AG04449 (cell line): ENCODE measurements at regions of chr16 and their contacts with region 1.

Region 1: GRCh38 chr16:20849587-20850390 is 43.5 kb downstream of the REXO5 start:
- DNase-seq: no peak
- H3K4me3 ChIP-seq: no peak overlapping the region
- CTCF ChIP-seq: peak; percentile 93

Region 2: DNA sequence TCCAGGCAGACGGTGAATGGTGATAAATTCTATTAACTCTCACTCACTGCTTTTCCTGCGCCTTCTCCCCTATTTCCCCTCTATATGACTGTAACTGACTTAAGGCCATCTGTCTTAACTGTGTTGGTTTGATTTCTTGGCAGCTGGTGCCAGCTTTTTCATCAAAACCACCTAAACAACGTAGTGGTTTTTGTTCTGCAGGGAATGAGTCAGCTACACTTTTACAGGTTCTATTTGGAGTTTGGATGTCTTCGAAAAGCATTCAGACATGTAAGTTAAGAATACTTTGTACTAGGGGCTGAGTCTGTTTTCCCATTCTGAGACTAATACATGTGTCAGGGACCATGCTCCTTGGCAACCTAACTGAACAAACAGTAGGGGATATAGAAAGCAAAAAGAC is 35.0 kb before region 1 on chr16:
- CTCF ChIA-PET with region 1: interaction called, 11 read pairs
- POLR2A ChIA-PET with region 1: no interaction called
- DNase-seq: no peak
- H3K4me3 ChIP-seq: no peak overlapping the region
- CTCF ChIP-seq: no peak

Region 3: DNA sequence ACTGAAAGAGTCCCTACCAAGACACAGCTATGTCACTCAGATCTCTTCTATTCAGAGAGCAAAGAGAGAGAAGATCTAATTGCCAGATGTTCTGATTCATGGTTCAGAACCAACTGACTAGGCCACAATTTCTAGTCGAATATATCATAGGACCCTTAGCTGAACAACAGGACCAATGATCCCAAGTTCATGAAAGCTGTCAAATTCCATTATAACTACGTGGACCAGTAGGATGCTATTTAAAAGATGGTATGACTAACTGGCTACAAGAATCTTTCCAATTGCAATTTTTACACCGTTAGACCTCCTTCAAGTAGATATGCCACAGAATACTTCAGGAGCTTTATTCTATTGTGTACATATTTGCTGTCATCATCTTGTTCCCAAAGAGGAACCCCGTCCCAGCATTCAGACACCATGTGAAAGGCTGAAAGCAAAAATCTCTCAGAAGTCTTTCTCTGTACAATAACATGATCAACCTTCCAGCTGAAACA is 24.3 kb after region 1 on chr16:
- CTCF ChIA-PET with region 1: interaction called, 75 read pairs
- POLR2A ChIA-PET with region 1: no interaction called
- DNase-seq: no peak
- H3K4me3 ChIP-seq: no peak overlapping the region
- CTCF ChIP-seq: no peak

Region 4: GRCh38 chr16:20938426-20938825 is 88.6 kb after region 1 on chr16:
- CTCF ChIA-PET with region 1: interaction called, 15 read pairs
- POLR2A ChIA-PET with region 1: no interaction called
- DNase-seq: no peak
- H3K4me3 ChIP-seq: no peak overlapping the region
- CTCF ChIP-seq: no peak

Region 5: DNA sequence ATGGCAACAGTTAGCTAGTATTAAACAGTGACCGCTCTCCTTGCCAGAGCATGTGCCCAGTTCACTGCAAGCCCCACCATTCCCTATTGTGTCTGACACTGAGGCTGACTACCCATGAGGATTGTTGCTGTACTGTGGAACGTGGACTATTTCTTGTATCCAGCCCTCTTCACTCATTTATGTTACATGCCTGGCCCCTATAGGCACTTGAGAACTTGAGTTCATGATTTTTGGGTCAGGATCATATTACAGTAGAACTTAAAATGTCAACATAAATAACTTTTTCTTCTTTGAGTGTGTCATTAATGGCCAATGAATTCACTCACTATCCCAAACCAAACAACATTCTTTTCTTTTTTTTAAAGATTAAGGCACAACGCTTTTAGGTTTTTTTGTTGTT is 106.5 kb after region 1 on chr16:
- CTCF ChIA-PET with region 1: interaction called, 11 read pairs
- POLR2A ChIA-PET with region 1: no interaction called
- DNase-seq: peak; percentile 7
- H3K4me3 ChIP-seq: no peak overlapping the region
- CTCF ChIP-seq: no peak

Region 6: GRCh38 chr16:21101631-21102420 is 252.0 kb after region 1 on chr16:
- CTCF ChIA-PET with region 1: interaction called, 89 read pairs
- POLR2A ChIA-PET with region 1: no interaction called
- DNase-seq: no peak
- H3K4me3 ChIP-seq: no peak overlapping the region
- CTCF ChIP-seq: peak; percentile 55

Region 7: DNA sequence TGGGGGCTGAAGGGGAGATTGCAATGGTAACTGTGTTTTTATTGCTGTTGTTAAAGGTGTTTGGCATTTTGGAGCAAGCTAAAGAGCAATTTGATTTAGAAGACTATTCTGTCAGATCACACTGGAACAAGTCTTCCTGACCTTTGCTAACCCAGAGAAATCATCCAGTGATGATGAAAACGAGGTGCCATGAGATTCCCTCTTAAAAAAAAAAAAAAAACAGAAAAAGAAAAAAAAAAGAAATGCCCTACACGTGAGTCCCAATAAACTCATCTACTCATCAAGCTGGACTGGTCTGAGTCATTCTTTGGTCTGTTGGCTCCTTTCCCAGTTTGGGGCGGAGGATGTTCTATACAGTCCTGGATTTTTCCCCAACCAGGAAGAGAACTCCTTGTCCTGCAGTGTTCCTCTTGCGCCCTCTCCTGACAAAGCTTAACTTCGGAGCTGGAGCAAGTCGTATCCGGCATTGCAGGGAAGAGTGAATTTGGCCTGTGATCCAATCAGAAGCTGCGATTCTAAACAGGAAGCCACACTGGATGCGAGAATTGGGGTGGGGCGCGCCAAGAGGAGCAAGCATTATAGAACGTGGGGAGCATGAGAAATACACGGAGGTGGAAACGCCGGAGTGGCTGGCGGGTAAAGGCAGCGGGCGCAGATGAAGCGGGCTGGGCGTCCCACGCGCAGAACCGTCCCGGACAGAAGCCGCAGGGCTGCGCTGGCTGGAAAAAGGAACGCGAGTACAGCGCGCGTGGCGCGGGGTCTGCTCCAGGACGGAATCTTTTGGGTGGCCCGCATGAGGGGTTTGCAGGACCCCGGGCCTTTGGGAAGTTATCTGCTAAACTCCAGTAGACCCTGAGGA is 450.7 kb after region 1 on chr16:
- CTCF ChIA-PET with region 1: interaction called, 10 read pairs
- POLR2A ChIA-PET with region 1: interaction called, 3 read pairs
- DNase-seq: peak; percentile 99
- H3K4me3 ChIP-seq: peak overlapping the region; percentile 80
- CTCF ChIP-seq: peak; percentile 88